ENCODE measurements at regions of chr16 and their contacts with region 1.

Region 1: GRCh38 chr16:31507929-31508705 is at the start of gene RUSF1:
- DNase-seq: peak; percentile 74 to 82 (median 77)
- H3K4me3 ChIP-seq: peak within 1 kb of the TSS; percentile 92 to 94
- H3K4me3 Mint-ChIP-seq: peak within 1 kb of the TSS; percentile 87 to 97 (median 93)
- H3K27ac ChIP-seq: peak within 1 kb of the TSS; percentile 83
- H3K27ac Mint-ChIP-seq: peak within 1 kb of the TSS; percentile 91 to 98 (median 97)
- H3K4me1 ChIP-seq: peaks cover 36% of the 10 kb centered on the region
- H3K4me1 Mint-ChIP-seq: peaks cover 22 to 59% (median 45%) of the 10 kb centered on the region in 4 donors
- H3K27me3 ChIP-seq: no peaks in the 10 kb centered on the region
- H3K27me3 Mint-ChIP-seq: no peaks in the 10 kb centered on the region
- total RNA-seq, gene RUSF1: 101 to 110 TPM

Region 2: DNA sequence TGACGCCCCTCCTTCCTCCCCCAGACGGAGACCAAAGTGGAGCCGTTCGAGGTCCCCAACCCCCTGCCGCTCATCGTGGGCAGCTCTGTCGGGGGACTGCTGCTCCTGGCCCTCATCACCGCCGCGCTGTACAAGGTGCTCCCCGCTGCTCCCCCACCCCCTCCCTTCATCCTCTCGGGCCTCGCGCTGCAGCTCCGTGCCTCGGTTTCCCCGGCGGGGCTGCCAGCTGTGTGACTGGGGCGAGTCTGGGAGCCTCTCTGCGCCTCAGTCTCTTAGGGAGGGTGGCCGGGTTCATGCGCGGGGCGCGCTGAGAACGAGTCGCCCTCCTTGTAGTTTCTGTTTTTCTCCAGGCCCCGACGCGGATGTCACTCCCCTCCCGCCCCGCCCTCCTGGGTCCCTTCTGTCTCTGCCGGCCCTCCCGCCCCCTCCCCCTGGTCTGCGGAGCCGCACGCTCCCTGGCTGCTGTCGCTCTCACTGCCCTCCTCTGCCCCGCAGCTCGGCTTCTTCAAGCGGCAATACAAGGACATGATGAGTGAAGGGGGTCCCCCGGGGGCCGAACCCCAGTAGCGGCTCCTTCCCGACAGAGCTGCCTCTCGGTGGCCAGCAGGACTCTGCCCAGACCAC is 176.9 kb before region 1 on chr16:
- CTCF ChIA-PET with region 1: no interaction called
- POLR2A ChIA-PET with region 1: no interaction called
- intact Hi-C with region 1: no loop called
- DNase-seq: no peak
- H3K4me3 ChIP-seq: peak overlapping the region in 1 of 2 donors; percentile 35
- H3K4me3 Mint-ChIP-seq: peak overlapping the region; percentile 65 to 86 (median 78)
- H3K27ac ChIP-seq: no peak overlapping the region
- H3K27ac Mint-ChIP-seq: peak overlapping the region in 2 of 7 donors; percentile 22 to 64
- H3K4me1 ChIP-seq: peaks cover 4% of the 10 kb centered on the region
- H3K4me1 Mint-ChIP-seq: peaks cover 7 to 17% (median 10%) of the 10 kb centered on the region in 4 donors
- H3K27me3 ChIP-seq: no peaks in the 10 kb centered on the region
- H3K27me3 Mint-ChIP-seq: peaks cover 11 to 21% of the 10 kb centered on the region in 2 donors

Region 3: GRCh38 chr16:31427441-31428278 is 80.5 kb before region 1 on chr16:
- CTCF ChIA-PET with region 1: no interaction called
- POLR2A ChIA-PET with region 1: no interaction called
- intact Hi-C with region 1: no loop called
- DNase-seq: peak; percentile 51 to 70 (median 59)
- H3K4me3 ChIP-seq: no peak overlapping the region
- H3K4me3 Mint-ChIP-seq: peak overlapping the region in 5 of 8 donors; percentile 29 to 57 (median 48)
- H3K27ac ChIP-seq: no peak overlapping the region
- H3K27ac Mint-ChIP-seq: no peak overlapping the region
- H3K4me1 ChIP-seq: peaks cover 4% of the 10 kb centered on the region
- H3K4me1 Mint-ChIP-seq: peaks cover 1 to 10% (median 7%) of the 10 kb centered on the region in 4 donors
- H3K27me3 ChIP-seq: no peaks in the 10 kb centered on the region
- H3K27me3 Mint-ChIP-seq: no peaks in the 10 kb centered on the region

Region 4: DNA sequence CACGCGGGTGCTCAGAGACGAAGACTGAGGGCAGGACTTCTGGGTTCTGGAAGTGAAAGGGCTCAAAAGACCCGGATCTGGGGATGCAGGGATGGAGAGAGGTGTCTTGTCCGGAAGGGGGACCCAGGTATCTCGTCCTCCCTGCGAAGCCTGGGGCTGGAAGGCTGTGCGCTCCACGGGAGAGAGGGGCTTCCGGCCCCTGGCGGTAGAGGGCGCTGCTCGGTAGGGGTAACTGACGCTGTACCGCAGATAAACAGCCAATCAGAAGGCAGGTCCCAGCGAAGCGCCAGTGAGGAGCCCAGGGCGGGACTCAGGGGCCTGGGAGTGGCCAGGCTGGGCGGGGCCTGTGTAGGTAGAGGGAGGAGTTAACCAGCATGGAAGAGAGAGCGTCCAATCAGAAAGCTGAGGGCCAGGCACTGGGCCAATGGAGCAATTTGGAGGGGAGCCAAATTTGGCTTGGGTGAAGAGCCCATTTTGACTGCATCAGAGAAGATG is 35.4 kb before region 1 on chr16:
- CTCF ChIA-PET with region 1: no interaction called
- POLR2A ChIA-PET with region 1: interaction called, 25 read pairs
- intact Hi-C with region 1: loop called (anchors 1 kb)
- DNase-seq: peak in 3 of 5 donors; percentile 21 to 27 (median 25)
- H3K4me3 ChIP-seq: peak overlapping the region in 1 of 2 donors; percentile 27
- H3K4me3 Mint-ChIP-seq: peak overlapping the region; percentile 56 to 90 (median 76)
- H3K27ac ChIP-seq: no peak overlapping the region
- H3K27ac Mint-ChIP-seq: peak overlapping the region in 1 of 7 donors; percentile 42
- H3K4me1 ChIP-seq: peaks cover 34% of the 10 kb centered on the region
- H3K4me1 Mint-ChIP-seq: peaks cover 10 to 32% (median 27%) of the 10 kb centered on the region in 4 donors
- H3K27me3 ChIP-seq: no peaks in the 10 kb centered on the region
- H3K27me3 Mint-ChIP-seq: peaks cover 0 to 13% of the 10 kb centered on the region in 2 donors

Region 5: GRCh38 chr16:31487720-31488467 is 20.2 kb before region 1 on chr16:
- CTCF ChIA-PET with region 1: interaction called, 3 read pairs
- POLR2A ChIA-PET with region 1: interaction called, 60 read pairs
- intact Hi-C with region 1: loop called (anchors 1 kb)
- DNase-seq: peak; percentile 77 to 90 (median 80)
- H3K4me3 ChIP-seq: peak overlapping the region; percentile 61 to 77
- H3K4me3 Mint-ChIP-seq: peak overlapping the region; percentile 89 to 95 (median 92)
- H3K27ac ChIP-seq: peak overlapping the region; percentile 39
- H3K27ac Mint-ChIP-seq: peak overlapping the region; percentile 71 to 94 (median 92)
- H3K4me1 ChIP-seq: peaks cover 13% of the 10 kb centered on the region
- H3K4me1 Mint-ChIP-seq: peaks cover 2 to 33% (median 16%) of the 10 kb centered on the region in 4 donors
- H3K27me3 ChIP-seq: no peaks in the 10 kb centered on the region
- H3K27me3 Mint-ChIP-seq: no peaks in the 10 kb centered on the region

Region 6: GRCh38 chr16:31496670-31497069 is 11.4 kb before region 1 on chr16:
- CTCF ChIA-PET with region 1: no interaction called
- POLR2A ChIA-PET with region 1: interaction called, 15 read pairs
- intact Hi-C with region 1: no loop called
- DNase-seq: no peak
- H3K4me3 ChIP-seq: no peak overlapping the region
- H3K4me3 Mint-ChIP-seq: no peak overlapping the region
- H3K27ac ChIP-seq: no peak overlapping the region
- H3K27ac Mint-ChIP-seq: no peak overlapping the region
- H3K4me1 ChIP-seq: no peaks in the 10 kb centered on the region
- H3K4me1 Mint-ChIP-seq: peaks cover 0 to 4% (median under 1%) of the 10 kb centered on the region in 4 donors
- H3K27me3 ChIP-seq: no peaks in the 10 kb centered on the region
- H3K27me3 Mint-ChIP-seq: no peaks in the 10 kb centered on the region

Region 7: DNA sequence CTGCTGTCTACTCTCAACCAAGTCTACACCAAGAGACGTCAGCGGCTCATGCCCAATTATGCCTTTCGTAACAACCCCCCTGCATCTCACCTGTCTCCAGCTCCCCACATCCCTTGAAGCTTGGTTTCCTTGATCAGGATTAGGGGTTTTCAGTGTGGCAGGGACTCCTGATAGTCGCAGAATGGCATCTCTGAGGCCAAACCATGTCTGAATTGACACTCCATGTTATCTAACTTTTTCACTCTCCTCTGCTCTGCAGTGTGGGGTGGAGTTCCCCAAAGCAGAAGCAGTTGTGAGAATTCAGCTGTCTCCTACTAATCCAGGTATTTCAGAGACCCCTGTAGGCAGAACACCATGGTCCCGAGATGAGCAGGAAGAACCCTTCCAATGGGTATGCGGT is 14.0 kb after region 1 on chr16:
- CTCF ChIA-PET with region 1: no interaction called
- POLR2A ChIA-PET with region 1: no interaction called
- intact Hi-C with region 1: no loop called
- DNase-seq: no peak
- H3K4me3 ChIP-seq: no peak overlapping the region
- H3K4me3 Mint-ChIP-seq: no peak overlapping the region
- H3K27ac ChIP-seq: no peak overlapping the region
- H3K27ac Mint-ChIP-seq: no peak overlapping the region
- H3K4me1 ChIP-seq: no peaks in the 10 kb centered on the region
- H3K4me1 Mint-ChIP-seq: no peaks in the 10 kb centered on the region
- H3K27me3 ChIP-seq: no peaks in the 10 kb centered on the region
- H3K27me3 Mint-ChIP-seq: peaks cover 0 to 3% of the 10 kb centered on the region in 2 donors

Region 8: DNA sequence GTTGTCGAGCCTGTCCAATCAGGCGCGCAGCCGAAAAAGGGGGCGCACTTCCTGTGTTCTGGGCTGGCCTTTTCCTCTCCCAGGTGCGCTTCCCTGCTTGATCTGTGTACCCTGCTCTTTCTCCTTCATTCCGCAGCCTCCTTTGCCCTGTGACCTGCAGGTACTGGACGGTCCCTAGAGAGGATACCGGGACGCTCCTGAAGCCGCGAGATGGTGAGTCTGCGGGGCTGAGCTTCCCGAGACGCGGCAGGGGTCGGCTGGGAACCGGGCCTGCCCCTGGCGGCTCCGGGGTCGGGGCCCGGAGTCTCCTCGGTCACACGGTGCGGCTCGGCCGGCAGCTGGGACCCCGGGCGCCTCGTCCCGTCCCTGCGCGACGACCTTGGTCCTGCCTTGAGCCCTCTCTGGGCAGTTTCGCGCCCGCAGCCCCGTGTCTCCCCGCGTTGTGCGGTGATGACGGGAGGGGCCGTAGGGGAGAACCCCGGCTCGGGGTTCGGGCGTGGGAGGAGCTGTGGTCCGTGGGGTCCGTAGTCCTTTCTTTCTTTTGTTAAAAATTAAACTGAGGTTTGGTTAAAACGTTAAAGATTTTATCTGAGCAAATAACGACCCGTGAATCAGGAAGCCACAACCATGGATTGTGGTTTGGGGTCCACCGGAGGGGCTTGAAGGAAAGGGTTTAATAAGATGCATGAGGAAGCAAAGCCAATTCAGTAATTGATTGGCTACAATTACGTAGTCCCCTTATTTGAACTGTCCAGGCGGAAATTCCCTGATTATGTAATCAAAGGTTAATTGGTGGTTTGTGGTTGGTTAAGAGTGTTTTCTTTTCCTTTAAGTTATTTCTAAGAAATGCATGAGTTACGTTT is 192.6 kb after region 1 on chr16:
- CTCF ChIA-PET with region 1: interaction called, 3 read pairs
- POLR2A ChIA-PET with region 1: interaction called, 9 read pairs
- intact Hi-C with region 1: loop called (anchors 5 kb)
- DNase-seq: peak; percentile 74 to 86 (median 81)
- H3K4me3 ChIP-seq: peak overlapping the region; percentile 61 to 70
- H3K4me3 Mint-ChIP-seq: peak overlapping the region; percentile 88 to 98 (median 92)
- H3K27ac ChIP-seq: peak overlapping the region; percentile 94
- H3K27ac Mint-ChIP-seq: peak overlapping the region; percentile 94 to 99 (median 96)
- H3K4me1 ChIP-seq: peaks cover 28% of the 10 kb centered on the region
- H3K4me1 Mint-ChIP-seq: peaks cover 25 to 33% (median 30%) of the 10 kb centered on the region in 4 donors
- H3K27me3 ChIP-seq: no peaks in the 10 kb centered on the region
- H3K27me3 Mint-ChIP-seq: no peaks in the 10 kb centered on the region

Measured in CD4-positive, alpha-beta memory T cell (primary cell).